CD8-positive, alpha-beta T cell (primary cell): ENCODE measurements at regions of chr15 and their contacts with region 1.

Region 1: GRCh38 chr15:92595506-92596381 is 59.8 kb downstream of the FAM174B start:
- DNase-seq: no peak
- ATAC-seq: no peak
- H3K4me3 ChIP-seq: no peak overlapping the region
- H3K4me3 Mint-ChIP-seq: no peak overlapping the region
- H3K27ac ChIP-seq: no peak overlapping the region
- H3K27ac Mint-ChIP-seq: no peak overlapping the region
- H3K4me1 ChIP-seq: no peaks in the 10 kb centered on the region
- H3K4me1 Mint-ChIP-seq: no peaks in the 10 kb centered on the region
- H3K27me3 ChIP-seq: no peaks in the 10 kb centered on the region
- H3K27me3 Mint-ChIP-seq: peaks cover 5% of the 10 kb centered on the region
- CTCF ChIP-seq: no peak

Region 2: GRCh38 chr15:92578096-92578835 is 17.5 kb before region 1 on chr15:
- CTCF ChIA-PET with region 1: no interaction called
- POLR2A ChIA-PET with region 1: no interaction called
- intact Hi-C with region 1: no loop called
- DNase-seq: peak in 1 of 9 experiments; percentile 32
- ATAC-seq: no peak
- H3K4me3 ChIP-seq: no peak overlapping the region
- H3K4me3 Mint-ChIP-seq: no peak overlapping the region
- H3K27ac ChIP-seq: no peak overlapping the region
- H3K27ac Mint-ChIP-seq: no peak overlapping the region
- H3K4me1 ChIP-seq: no peaks in the 10 kb centered on the region
- H3K4me1 Mint-ChIP-seq: no peaks in the 10 kb centered on the region
- H3K27me3 ChIP-seq: no peaks in the 10 kb centered on the region
- H3K27me3 Mint-ChIP-seq: peaks cover 3% of the 10 kb centered on the region
- CTCF ChIP-seq: no peak

Region 3: GRCh38 chr15:92619145-92620101 is 23.7 kb after region 1 on chr15:
- CTCF ChIA-PET with region 1: no interaction called
- POLR2A ChIA-PET with region 1: no interaction called
- intact Hi-C with region 1: loop called in 1 of 2 experiments (anchors 1 kb)
- DNase-seq: no peak
- ATAC-seq: no peak
- H3K4me3 ChIP-seq: no peak overlapping the region
- H3K4me3 Mint-ChIP-seq: no peak overlapping the region
- H3K27ac ChIP-seq: no peak overlapping the region
- H3K27ac Mint-ChIP-seq: no peak overlapping the region
- H3K4me1 ChIP-seq: no peaks in the 10 kb centered on the region
- H3K4me1 Mint-ChIP-seq: no peaks in the 10 kb centered on the region
- H3K27me3 ChIP-seq: no peaks in the 10 kb centered on the region
- H3K27me3 Mint-ChIP-seq: no peaks in the 10 kb centered on the region
- CTCF ChIP-seq: no peak